Gastrocnemius medialis (tissue), 4 donors: ENCODE measurements at regions of chr4 and their contacts with region 1.

Region 1: GRCh38 chr4:146916479-146917076 is 29.1 kb downstream of the TTC29 start:
- DNase-seq: no peak
- ATAC-seq: no peak
- H3K4me3 ChIP-seq: no peak overlapping the region
- H3K27ac ChIP-seq: no peak overlapping the region
- H3K4me1 ChIP-seq: no peaks in the 10 kb centered on the region
- H3K27me3 ChIP-seq: no peaks in the 10 kb centered on the region
- CTCF ChIP-seq: peak; percentile 23 to 60 (median 52)
- POLR2A ChIP-seq: no peak

Region 2: DNA sequence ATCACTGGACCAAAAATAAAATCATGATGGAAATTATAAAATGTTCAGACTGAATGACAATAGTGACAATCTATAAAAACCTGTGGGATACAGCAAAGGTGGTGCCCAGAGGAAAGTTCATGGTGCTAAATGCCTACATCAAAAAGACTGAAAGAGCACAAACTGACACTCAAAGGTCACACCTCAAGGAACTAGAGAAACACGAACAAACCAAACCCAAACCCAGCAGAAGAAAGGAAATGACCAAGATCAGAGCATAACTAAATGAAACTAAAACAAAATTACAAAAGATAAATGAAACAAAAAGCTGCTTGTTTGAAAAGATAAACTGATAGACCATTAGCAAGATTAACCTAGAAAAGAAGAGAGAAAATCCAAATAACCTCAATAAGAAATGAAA is 1897.2 kb before region 1 on chr4:
- in situ Hi-C with region 1: no loop called
- intact Hi-C with region 1: no loop called
- DNase-seq: no peak
- ATAC-seq: no peak
- H3K4me3 ChIP-seq: no peak overlapping the region
- H3K27ac ChIP-seq: no peak overlapping the region
- H3K4me1 ChIP-seq: no peaks in the 10 kb centered on the region
- H3K27me3 ChIP-seq: no peaks in the 10 kb centered on the region
- CTCF ChIP-seq: no peak
- POLR2A ChIP-seq: no peak

Region 3: GRCh38 chr4:146124023-146124662 is 792.4 kb before region 1 on chr4:
- in situ Hi-C with region 1: loop called in 1 of 4 experiments (anchors 25 kb)
- intact Hi-C with region 1: no loop called
- DNase-seq: no peak
- ATAC-seq: no peak
- H3K4me3 ChIP-seq: no peak overlapping the region
- H3K27ac ChIP-seq: no peak overlapping the region
- H3K4me1 ChIP-seq: no peaks in the 10 kb centered on the region
- H3K27me3 ChIP-seq: no peaks in the 10 kb centered on the region
- CTCF ChIP-seq: no peak
- POLR2A ChIP-seq: no peak

Region 4: DNA sequence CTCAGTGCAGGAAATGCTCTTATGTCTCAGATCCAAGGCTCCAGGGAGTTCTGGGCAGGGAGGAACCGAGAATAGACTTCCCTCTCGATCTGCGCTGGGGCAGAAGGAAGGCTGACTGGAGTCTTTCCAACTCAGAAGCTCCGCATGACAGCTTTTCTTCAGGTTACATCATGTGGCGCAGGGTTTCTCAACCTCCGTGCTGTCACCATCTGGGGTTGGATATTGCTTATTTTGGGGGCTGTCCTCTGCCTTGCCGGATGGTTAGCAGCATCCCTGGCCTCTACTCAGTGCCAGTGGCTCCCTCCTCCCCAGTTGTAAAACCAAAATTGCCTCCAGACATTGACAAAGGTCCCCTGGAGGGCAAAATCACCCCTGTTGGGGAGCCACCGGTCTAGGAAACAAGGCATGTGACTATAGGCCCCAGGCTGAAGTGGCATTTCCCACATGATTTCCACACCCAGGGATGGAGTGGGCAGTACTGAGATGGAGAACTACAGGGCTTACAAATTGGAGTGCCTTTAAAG is 680.9 kb before region 1 on chr4:
- in situ Hi-C with region 1: no loop called
- intact Hi-C with region 1: loop called (anchors 5 kb)
- DNase-seq: peak in 1 of 2 donors; percentile 28
- ATAC-seq: peak; percentile 49 to 63
- H3K4me3 ChIP-seq: no peak overlapping the region
- H3K27ac ChIP-seq: peak overlapping the region in 1 of 4 donors; percentile 54
- H3K4me1 ChIP-seq: peaks cover 0 to 9% of the 10 kb centered on the region in 2 donors
- H3K27me3 ChIP-seq: no peaks in the 10 kb centered on the region
- CTCF ChIP-seq: no peak
- POLR2A ChIP-seq: no peak

Region 5: GRCh38 chr4:146333187-146333894 is 583.2 kb before region 1 on chr4:
- in situ Hi-C with region 1: loop called (anchors 10 to 25 kb)
- intact Hi-C with region 1: no loop called
- DNase-seq: no peak
- ATAC-seq: no peak
- H3K4me3 ChIP-seq: no peak overlapping the region
- H3K27ac ChIP-seq: no peak overlapping the region
- H3K4me1 ChIP-seq: peaks cover 12 to 15% of the 10 kb centered on the region in 2 donors
- H3K27me3 ChIP-seq: no peaks in the 10 kb centered on the region
- CTCF ChIP-seq: no peak
- POLR2A ChIP-seq: no peak

Region 6: GRCh38 chr4:146342600-146343192 is 573.9 kb before region 1 on chr4:
- in situ Hi-C with region 1: loop called (anchors 10 to 25 kb)
- intact Hi-C with region 1: loop called (anchors 5 kb)
- DNase-seq: no peak
- ATAC-seq: no peak
- H3K4me3 ChIP-seq: no peak overlapping the region
- H3K27ac ChIP-seq: no peak overlapping the region
- H3K4me1 ChIP-seq: no peaks in the 10 kb centered on the region
- H3K27me3 ChIP-seq: no peaks in the 10 kb centered on the region
- CTCF ChIP-seq: peak in 4 of 5 experiments; percentile 28 to 75 (median 54)
- POLR2A ChIP-seq: no peak

Region 7: GRCh38 chr4:146833530-146833929 is 83.0 kb before region 1 on chr4:
- in situ Hi-C with region 1: no loop called
- intact Hi-C with region 1: no loop called
- DNase-seq: no peak
- ATAC-seq: no peak
- H3K4me3 ChIP-seq: no peak overlapping the region
- H3K27ac ChIP-seq: no peak overlapping the region
- H3K4me1 ChIP-seq: no peaks in the 10 kb centered on the region
- H3K27me3 ChIP-seq: no peaks in the 10 kb centered on the region
- CTCF ChIP-seq: no peak
- POLR2A ChIP-seq: no peak

Region 8: GRCh38 chr4:147076179-147076578 is 159.6 kb after region 1 on chr4:
- in situ Hi-C with region 1: no loop called
- intact Hi-C with region 1: no loop called
- DNase-seq: no peak
- ATAC-seq: no peak
- H3K4me3 ChIP-seq: no peak overlapping the region
- H3K27ac ChIP-seq: no peak overlapping the region
- H3K4me1 ChIP-seq: peaks cover 0 to 6% of the 10 kb centered on the region in 2 donors
- H3K27me3 ChIP-seq: no peaks in the 10 kb centered on the region
- CTCF ChIP-seq: no peak
- POLR2A ChIP-seq: no peak

Region 9: GRCh38 chr4:147096667-147097604 is 180.4 kb after region 1 on chr4:
- in situ Hi-C with region 1: no loop called
- intact Hi-C with region 1: loop called (anchors 5 kb)
- DNase-seq: no peak
- ATAC-seq: peak; percentile 52 to 55
- H3K4me3 ChIP-seq: no peak overlapping the region
- H3K27ac ChIP-seq: no peak overlapping the region
- H3K4me1 ChIP-seq: no peaks in the 10 kb centered on the region
- H3K27me3 ChIP-seq: no peaks in the 10 kb centered on the region
- CTCF ChIP-seq: peak; percentile 45 to 75 (median 65)
- POLR2A ChIP-seq: no peak